CD8-positive, alpha-beta T cell (primary cell): ENCODE measurements at regions of chr17 and their contacts with region 1.

Region 1: DNA sequence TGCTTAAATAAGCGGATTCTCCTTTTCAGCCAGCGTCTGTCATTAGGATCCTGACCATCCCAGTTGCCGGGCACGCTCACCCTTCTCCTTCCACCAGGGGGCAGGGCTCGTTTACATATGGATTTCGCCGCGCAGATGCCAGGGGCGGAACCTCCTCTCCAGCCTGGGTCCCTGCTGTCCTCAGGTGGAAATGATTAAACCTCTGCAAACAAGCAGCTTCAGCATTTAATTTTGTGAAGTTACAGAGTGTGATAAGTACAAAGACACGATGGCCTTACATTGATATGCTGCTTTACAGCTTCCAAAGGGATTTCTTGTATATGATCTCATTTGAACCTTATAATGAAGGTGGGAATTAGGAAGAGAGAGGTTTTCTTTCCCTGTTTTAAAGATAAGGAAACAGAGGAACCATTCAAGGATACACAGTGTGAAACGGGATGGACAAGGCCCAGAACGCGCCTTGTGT is 3.9 kb upstream of the KRT28 start:
- DNase-seq: peak; percentile 50 to 82 (median 75)
- ATAC-seq: peak; percentile 92
- H3K4me3 ChIP-seq: no peak overlapping the region
- H3K4me3 Mint-ChIP-seq: no peak overlapping the region
- H3K27ac ChIP-seq: no peak overlapping the region
- H3K27ac Mint-ChIP-seq: no peak overlapping the region
- H3K4me1 ChIP-seq: no peaks in the 10 kb centered on the region
- H3K4me1 Mint-ChIP-seq: peaks cover 4% of the 10 kb centered on the region
- H3K27me3 ChIP-seq: peaks cover 0 to 4% of the 10 kb centered on the region in 2 experiments
- H3K27me3 Mint-ChIP-seq: peaks cover 44% of the 10 kb centered on the region
- CTCF ChIP-seq: peak; percentile 94

Region 2: GRCh38 chr17:40857535-40857934 is 53.9 kb after region 1 on chr17:
- CTCF ChIA-PET with region 1: interaction called, 3 read pairs
- POLR2A ChIA-PET with region 1: no interaction called
- intact Hi-C with region 1: loop called in 1 of 2 experiments (anchors 5 kb)
- DNase-seq: no peak
- ATAC-seq: no peak
- H3K4me3 ChIP-seq: no peak overlapping the region
- H3K4me3 Mint-ChIP-seq: no peak overlapping the region
- H3K27ac ChIP-seq: no peak overlapping the region
- H3K27ac Mint-ChIP-seq: no peak overlapping the region
- H3K4me1 ChIP-seq: no peaks in the 10 kb centered on the region
- H3K4me1 Mint-ChIP-seq: peaks cover 2% of the 10 kb centered on the region
- H3K27me3 ChIP-seq: no peaks in the 10 kb centered on the region
- H3K27me3 Mint-ChIP-seq: peaks cover 17% of the 10 kb centered on the region
- CTCF ChIP-seq: no peak

Region 3: DNA sequence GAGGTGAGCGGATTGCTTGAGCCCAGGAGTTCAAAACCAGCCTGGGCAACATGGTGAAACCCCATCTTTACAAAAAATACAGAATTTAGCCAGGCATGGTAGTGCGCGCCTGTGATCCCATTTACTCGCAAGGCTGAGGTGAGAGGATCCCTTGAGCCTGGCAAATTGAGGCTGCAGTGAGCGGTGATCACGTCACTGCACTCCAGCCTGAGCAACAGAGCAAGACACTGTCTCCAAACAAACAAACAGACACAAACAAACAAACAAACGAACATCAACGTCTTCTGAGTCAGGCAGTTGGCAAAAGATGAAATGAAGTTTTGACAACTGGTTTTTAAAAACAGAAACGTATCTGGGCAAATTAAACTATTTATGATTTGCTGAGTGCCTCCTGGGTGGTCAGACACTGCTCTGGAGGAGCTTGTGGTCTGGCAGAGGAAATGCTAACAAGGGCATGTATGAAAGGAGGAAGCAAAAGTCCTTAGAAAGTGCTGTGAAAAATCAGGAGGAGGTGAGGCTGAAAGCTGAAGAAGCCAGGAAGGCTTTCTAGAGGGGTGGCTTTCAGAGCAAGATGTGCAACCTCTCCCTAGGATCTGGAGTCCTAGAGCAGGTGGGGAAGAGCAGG is 91.6 kb after region 1 on chr17:
- CTCF ChIA-PET with region 1: no interaction called
- POLR2A ChIA-PET with region 1: no interaction called
- intact Hi-C with region 1: no loop called
- DNase-seq: no peak
- ATAC-seq: no peak
- H3K4me3 ChIP-seq: no peak overlapping the region
- H3K4me3 Mint-ChIP-seq: no peak overlapping the region
- H3K27ac ChIP-seq: no peak overlapping the region
- H3K27ac Mint-ChIP-seq: no peak overlapping the region
- H3K4me1 ChIP-seq: no peaks in the 10 kb centered on the region
- H3K4me1 Mint-ChIP-seq: no peaks in the 10 kb centered on the region
- H3K27me3 ChIP-seq: no peaks in the 10 kb centered on the region
- H3K27me3 Mint-ChIP-seq: peaks cover 44% of the 10 kb centered on the region
- CTCF ChIP-seq: no peak